Endothelial cell of umbilical vein (primary cell): ENCODE measurements at regions of chrX and their contacts with region 1.

Region 1: DNA sequence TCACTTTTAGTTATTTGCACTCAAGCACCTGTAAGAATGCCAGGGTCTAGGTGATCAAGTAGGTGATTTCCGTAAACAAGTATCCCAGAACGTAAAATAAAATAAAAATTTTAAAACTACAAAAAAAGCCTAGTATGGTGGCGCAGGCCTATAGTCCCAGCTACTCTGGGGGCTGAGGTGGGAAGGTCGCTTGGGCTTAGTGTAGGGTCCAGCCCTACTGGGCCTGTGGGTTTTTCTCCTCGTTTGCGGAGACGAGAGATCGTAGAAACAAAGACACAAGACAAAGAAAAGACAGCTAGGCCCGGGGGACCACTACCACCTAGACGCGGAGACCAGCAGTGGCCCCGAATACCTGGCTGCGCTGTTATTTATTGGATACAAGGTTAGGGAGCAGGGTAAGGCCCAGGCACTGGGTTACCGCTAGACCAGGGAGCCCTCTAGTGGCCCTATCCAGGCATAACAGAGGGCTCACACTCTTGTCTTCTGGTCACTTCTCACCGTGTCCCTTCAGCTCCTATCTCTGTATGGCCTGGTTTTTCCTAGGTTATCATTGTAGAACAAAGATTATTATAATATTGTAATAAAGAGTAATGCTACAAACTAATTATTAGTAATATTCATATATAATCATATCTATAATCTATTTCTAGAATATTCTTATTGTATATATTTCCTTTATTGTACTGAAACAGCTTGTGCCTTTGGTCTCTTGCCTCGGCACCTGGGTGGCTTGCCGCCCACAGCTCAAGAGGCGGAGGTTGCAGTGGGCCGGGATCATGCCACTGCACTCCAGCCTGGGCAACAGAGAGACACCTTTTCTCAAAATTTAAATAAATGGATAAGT is 38.4 kb downstream of the SAGE1 start:
- DNase-seq: peak; percentile 5
- H3K4me3 ChIP-seq: no peak overlapping the region
- H3K27ac ChIP-seq: no peak overlapping the region
- H3K4me1 ChIP-seq: no peaks in the 10 kb centered on the region
- H3K27me3 ChIP-seq: no peaks in the 10 kb centered on the region
- CTCF ChIP-seq: peak; percentile 33 to 63
- POLR2A ChIP-seq: no peak

Region 2: GRCh38 chrX:135625995-135626394 is 305.9 kb before region 1 on chrX:
- CTCF ChIA-PET with region 1: no interaction called
- POLR2A ChIA-PET with region 1: no interaction called
- dilution Hi-C with region 1: no loop called
- intact Hi-C with region 1: loop called (anchors 5 kb)
- DNase-seq: peak; percentile 1
- H3K4me3 ChIP-seq: no peak overlapping the region
- H3K27ac ChIP-seq: no peak overlapping the region
- H3K4me1 ChIP-seq: no peaks in the 10 kb centered on the region
- H3K27me3 ChIP-seq: no peaks in the 10 kb centered on the region
- CTCF ChIP-seq: no peak
- POLR2A ChIP-seq: no peak

Region 3: GRCh38 chrX:135893294-135893817 is 38.5 kb before region 1 on chrX and contains the starts of genes CT45A10 and SAGE1:
- CTCF ChIA-PET with region 1: no interaction called
- POLR2A ChIA-PET with region 1: no interaction called
- dilution Hi-C with region 1: no loop called
- intact Hi-C with region 1: no loop called
- DNase-seq: no peak
- H3K4me3 ChIP-seq: no peak within 1 kb of the TSS
- H3K27ac ChIP-seq: no peak within 1 kb of the TSS
- H3K4me1 ChIP-seq: no peaks in the 10 kb centered on the region
- H3K27me3 ChIP-seq: no peaks in the 10 kb centered on the region
- CTCF ChIP-seq: no peak
- POLR2A ChIP-seq: no peak
- total RNA-seq, gene CT45A10: not detected in 2 replicates
- total RNA-seq, gene SAGE1: not detected in 2 replicates